ENCODE measurements at regions of chr5 and their contacts with region 1.

Region 1: GRCh38 chr5:81288021-81288433 is 13.4 kb upstream of the ZCCHC9 start:
- DNase-seq: no peak
- H3K27ac ChIP-seq: no peak overlapping the region
- CTCF ChIP-seq: no peak

Region 2: DNA sequence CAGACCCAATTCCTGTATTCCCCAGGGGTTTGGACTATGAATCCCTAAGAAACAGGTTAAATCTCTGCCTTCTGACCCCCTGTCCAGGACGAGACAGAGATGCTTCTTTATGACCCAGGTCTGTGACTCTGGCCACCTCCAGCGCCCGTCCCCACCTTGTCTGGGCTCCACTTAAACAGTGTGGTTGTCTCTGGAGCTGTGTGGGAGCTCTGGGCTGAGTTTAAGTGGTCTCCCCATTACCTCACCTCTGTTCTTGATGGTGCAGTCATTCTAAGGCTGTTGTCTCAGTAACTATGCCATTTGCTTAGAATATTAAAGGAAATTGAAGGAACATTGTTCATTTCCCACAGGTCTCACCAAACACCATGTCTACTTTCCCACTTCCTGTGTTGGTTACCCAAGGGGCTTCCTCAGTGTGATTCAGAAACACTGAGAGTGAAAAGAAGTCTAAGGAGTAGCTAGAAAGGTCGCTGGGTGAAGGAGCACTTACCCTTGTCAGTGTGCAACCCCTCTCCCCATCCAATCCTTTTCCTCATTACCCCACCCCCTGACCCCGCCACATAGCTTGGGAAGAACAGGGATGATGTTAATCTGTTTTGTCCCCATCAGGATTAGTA is 182.7 kb before region 1 on chr5:
- CTCF ChIA-PET with region 1: no interaction called
- POLR2A ChIA-PET with region 1: no interaction called
- DNase-seq: no peak
- H3K27ac ChIP-seq: no peak overlapping the region
- CTCF ChIP-seq: no peak

Region 3: GRCh38 chr5:81301271-81302015 is 13.4 kb after region 1 on chr5 and contains the start of gene ZCCHC9:
- CTCF ChIA-PET with region 1: interaction called, 15 read pairs
- POLR2A ChIA-PET with region 1: interaction called, 5 read pairs
- DNase-seq: peak; percentile 91
- H3K27ac ChIP-seq: peak within 1 kb of the TSS; percentile 77
- CTCF ChIP-seq: no peak; the same call in 1 of the 2 replicates

Measured in RWPE1 (cell line).